Posterior vena cava (tissue), 2 donors: ENCODE measurements at regions of chr2 and their contacts with region 1.

Region 1: GRCh38 chr2:203578759-203579643 is 43.9 kb upstream of the RAPH1 start:
- DNase-seq: no peak

Region 2: DNA sequence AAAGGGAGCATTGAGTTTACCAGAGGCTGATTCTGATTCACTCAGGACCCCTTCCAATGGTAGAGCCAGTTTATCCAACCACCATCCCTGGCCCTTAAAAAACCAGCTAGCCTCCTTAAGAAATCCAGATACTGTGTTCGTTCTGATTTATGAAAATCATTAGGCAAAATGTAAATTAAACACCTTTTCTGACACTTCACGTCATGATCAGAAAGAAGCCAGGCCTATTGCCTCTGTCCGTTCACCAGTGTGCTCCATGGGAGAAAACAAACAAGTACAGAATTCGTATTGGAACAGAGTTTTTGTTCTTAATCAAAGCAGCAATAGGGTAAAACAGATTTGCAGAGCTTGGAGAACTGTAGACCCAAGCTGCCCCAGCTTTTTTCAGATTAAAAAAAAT is 12.8 kb before region 1 on chr2:
- intact Hi-C with region 1: loop called in 1 of 2 experiments (anchors 1 kb)
- DNase-seq: no peak

Region 3: DNA sequence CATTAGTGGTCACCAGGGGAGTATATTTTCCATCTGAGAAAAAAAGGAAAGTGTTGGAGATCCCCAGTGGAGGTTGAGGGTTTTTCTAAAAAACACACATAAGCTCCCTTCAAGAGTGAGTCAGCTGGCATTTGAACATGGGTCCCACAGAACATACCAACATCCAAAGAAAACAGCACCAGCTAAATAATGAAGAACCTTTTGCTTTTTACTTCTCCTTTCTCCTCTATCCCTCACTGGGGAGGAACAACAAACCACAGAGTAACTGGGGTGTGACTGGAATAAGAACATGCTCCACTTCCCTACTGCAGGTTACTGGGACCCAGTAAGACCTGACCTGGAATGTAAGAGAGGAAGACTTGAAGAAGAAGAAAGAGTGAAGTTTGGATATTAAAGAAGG is 12.6 kb after region 1 on chr2:
- intact Hi-C with region 1: no loop called
- DNase-seq: no peak

Region 4: DNA sequence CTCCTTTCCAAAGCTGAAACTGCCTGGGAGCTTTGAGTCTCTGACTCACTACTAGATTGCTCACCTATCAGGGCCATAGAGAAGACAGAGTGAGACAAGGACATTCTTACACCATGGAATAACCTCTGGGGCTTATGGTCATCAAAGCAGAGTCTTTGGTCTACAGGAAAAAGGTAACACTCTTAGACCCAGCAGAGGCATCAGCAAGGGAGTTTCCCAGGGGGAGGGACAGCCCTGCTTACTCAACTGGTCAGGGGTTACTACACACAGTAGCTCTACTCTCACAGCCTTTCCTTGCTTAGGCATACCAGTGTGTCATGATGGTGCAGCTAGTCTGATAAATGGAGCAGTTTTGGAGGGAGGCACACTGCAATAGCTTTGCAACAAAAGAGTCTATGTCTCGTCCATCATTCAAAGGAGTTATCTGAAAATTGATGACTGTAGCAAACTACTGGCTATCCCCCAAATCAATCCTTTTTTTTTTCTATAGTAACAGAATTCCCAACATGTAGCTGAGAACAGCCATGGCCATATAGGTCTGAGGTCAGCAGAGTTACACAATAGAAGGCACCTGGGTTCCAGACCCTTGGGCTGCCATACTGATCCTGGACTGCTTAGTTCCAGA is 105.0 kb after region 1 on chr2:
- intact Hi-C with region 1: loop called in 1 of 2 experiments (anchors 10 kb)
- DNase-seq: no peak